Posterior cingulate gyrus (tissue), 11 donors: ENCODE measurements at regions of chr2 and their contacts with region 1.

Region 1: DNA sequence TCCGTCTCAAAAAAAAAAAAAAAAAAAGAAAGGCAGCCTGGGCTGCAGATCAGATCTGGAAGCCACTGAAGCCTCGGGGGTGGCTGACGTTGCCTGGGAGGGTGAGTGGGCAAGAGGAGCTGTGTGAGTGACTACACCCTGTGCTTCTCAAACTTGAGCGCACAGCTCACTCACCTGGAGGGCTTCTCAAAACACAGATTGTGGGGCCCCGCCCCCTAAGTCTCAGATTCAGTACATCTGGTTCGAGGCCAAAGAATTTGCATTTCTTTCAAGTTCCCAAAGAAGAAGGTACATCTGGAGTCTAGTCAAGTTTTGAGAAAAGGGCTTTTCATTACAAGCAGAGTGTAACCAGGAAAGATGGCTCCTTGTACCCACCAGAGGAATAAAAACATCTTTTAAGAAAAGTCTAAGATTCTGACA is 97.7 kb upstream of the CAB39 start:
- DNase-seq: no peak

Region 2: GRCh38 chr2:229780856-229781773 is 833.8 kb before region 1 on chr2:
- intact Hi-C with region 1: loop called (anchors 2 kb)
- DNase-seq: no peak

Region 3: DNA sequence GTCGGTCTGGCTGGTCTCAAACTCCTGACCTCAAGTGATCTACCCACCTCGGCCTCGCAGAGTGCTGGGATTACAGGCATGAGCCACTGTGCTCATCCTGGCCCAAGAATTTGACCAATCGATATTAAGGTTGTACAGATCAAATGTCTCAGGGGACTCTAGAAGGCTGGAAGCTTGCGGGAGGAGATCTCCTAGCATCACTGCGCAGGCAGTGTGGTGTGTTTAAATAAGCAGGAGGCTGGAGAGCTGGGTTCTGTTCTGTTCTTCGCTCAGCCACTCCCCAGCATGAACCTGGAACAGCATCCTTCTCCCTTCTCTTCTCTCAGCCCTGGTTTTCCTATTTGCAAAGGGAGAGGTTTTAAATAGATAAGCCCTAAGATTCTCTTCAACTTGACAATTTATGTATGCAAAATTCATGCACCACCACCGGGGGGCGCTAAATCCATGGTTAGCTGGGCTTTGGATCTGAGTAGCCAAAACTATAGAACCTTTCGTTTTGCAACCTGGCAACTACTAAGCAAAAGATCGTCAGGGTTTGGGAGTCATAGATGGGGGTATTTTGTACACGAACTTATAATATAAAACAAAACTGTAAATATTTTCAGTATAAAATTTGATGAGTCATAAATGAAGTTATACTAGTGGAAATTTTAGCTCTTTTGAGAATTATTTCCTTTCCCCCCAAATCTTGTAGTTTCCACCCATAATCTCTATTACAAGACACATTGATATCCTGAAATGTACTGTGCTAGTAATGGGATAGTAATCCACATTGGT is 606.8 kb before region 1 on chr2:
- intact Hi-C with region 1: loop called (anchors 1 kb)
- DNase-seq: peak; percentile 52 to 95 (median 81)

Region 4: GRCh38 chr2:230068016-230068650 is 546.8 kb before region 1 on chr2:
- intact Hi-C with region 1: loop called (anchors 1 kb)
- DNase-seq: peak; percentile 36 to 93 (median 62)

Region 5: GRCh38 chr2:230153390-230153976 is 461.4 kb before region 1 on chr2:
- intact Hi-C with region 1: loop called (anchors 10 kb)
- DNase-seq: no peak